Activated CD4-positive, alpha-beta T cell treated with anti-CD3 and anti-CD28 coated beads for 36 hours (primary cell): ENCODE measurements at regions of chr10 and their contacts with region 1.

Region 1: DNA sequence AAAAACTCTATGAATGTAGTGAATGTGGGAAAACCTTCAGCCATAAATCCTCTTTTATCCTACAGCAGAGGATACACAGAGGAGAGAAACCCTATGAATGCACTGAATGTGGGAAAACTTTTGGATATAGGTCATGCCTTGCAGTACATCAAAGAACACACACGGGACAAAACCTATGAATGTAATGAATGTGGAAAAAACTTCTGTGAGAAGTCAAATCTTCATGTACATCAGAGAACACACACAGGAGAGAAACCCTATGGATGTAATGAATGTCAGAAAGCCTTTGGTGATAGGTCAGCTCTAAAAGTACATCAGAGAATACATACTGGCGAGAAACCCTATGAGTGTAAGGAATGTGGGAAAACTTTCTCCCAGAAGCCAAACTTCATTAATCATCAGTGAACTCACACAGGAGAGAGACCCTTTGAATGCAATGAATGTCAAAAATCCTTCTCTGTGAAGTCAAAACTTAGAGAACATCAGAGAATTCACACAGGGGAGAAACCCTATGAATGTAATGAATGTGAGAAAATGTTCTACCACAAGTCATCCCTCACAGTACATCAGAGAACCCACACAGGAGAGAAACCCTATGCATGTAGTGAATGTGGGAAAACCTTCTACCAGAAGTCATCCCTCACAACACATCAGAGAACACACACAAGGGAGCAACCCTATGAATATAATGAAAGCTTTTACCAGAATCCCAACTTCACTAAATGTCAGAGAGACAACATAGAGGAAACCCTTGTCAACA is 45.6 kb downstream of the ZNF487 start:
- DNase-seq: no peak
- ATAC-seq: no peak
- H3K4me3 Mint-ChIP-seq: no peak overlapping the region
- H3K27ac Mint-ChIP-seq: no peak overlapping the region
- H3K4me1 Mint-ChIP-seq: no peaks in the 10 kb centered on the region
- H3K27me3 Mint-ChIP-seq: no peaks in the 10 kb centered on the region

Region 2: GRCh38 chr10:43623351-43623750 is 140.9 kb after region 1 on chr10:
- CTCF ChIA-PET with region 1: no interaction called
- POLR2A ChIA-PET with region 1: no interaction called
- intact Hi-C with region 1: loop called in 1 of 2 experiments (anchors 10 kb)
- DNase-seq: no peak
- ATAC-seq: no peak
- H3K4me3 Mint-ChIP-seq: peak overlapping the region; percentile 9
- H3K27ac Mint-ChIP-seq: peak overlapping the region; percentile 52
- H3K4me1 Mint-ChIP-seq: peaks cover 13% of the 10 kb centered on the region
- H3K27me3 Mint-ChIP-seq: no peaks in the 10 kb centered on the region